ENCODE measurements at regions of chr4 and their contacts with region 1.

Region 1: GRCh38 chr4:53702334-53703266 is 111.3 kb upstream of the LNX1 start:
- DNase-seq: peak; percentile 88
- ATAC-seq: peak; percentile 96

Region 2: GRCh38 chr4:53490965-53491622 is 211.5 kb before region 1 on chr4:
- intact Hi-C with region 1: loop called (anchors 2 kb)
- DNase-seq: no peak
- ATAC-seq: peak; percentile 53

Region 3: GRCh38 chr4:53537606-53538005 is 165.0 kb before region 1 on chr4:
- intact Hi-C with region 1: loop called (anchors 2 kb)
- DNase-seq: no peak
- ATAC-seq: no peak

Region 4: GRCh38 chr4:53653484-53654053 is 49.0 kb before region 1 on chr4:
- intact Hi-C with region 1: loop called (anchors 5 kb)
- DNase-seq: no peak
- ATAC-seq: no peak

Region 5: GRCh38 chr4:53714236-53715140 is 11.9 kb after region 1 on chr4:
- intact Hi-C with region 1: no loop called
- DNase-seq: no peak
- ATAC-seq: no peak

Region 6: DNA sequence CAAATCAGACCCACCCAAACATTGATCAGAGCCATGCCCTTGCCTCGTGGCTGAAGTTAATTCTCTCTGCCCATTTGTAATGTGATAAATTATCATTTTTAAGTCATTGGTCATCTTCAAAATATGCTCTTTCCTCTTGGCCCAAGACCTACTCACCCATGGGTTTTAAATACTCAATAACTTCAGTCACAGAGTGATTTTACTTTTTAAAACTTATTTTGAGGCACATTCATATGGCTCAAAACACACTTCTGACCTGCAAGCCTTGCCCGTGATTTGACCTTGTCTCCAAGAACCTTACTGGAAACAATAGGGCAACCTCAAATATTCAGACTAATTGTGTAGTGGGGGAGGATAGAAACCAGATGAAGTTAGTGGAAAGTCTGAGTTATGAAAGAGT is 64.9 kb after region 1 on chr4:
- intact Hi-C with region 1: no loop called
- DNase-seq: no peak
- ATAC-seq: no peak

Region 7: DNA sequence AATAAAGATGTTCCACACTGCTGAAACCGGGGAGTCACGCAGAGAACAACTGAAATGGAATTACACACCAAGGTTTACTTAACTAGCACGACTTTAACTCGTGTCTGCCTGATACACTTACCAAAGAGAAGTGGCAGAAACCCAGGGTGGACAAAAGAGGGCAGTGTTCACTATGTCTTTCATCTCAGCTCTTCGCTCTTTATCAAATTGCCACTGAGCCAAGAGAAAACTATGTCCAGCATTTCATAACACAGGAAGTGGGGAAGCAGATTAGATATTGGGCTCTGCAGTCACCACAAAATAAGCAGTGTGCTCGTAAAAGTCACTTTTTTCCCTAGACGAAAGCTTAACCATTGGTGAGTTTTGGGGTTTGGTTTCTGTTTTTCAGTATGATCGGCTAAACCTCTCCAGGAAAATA is 206.1 kb after region 1 on chr4:
- intact Hi-C with region 1: loop called (anchors 5 kb)
- DNase-seq: no peak
- ATAC-seq: peak; percentile 91

Region 8: GRCh38 chr4:54217642-54218495 is 515.3 kb after region 1 on chr4:
- intact Hi-C with region 1: loop called (anchors 5 kb)
- DNase-seq: peak; percentile 83
- ATAC-seq: peak; percentile 97

Measured in Right ventricle myocardium inferior (tissue), 1 donor.